Sigmoid colon (tissue), 7 donors: ENCODE measurements at regions of chrX and their contacts with region 1.

Region 1: GRCh38 chrX:132092439-132093065 is 35.3 kb downstream of the FRMD7 start:
- DNase-seq: no peak
- H3K4me3 ChIP-seq: no peak overlapping the region
- H3K27ac ChIP-seq: no peak overlapping the region
- H3K4me1 ChIP-seq: no peaks in the 10 kb centered on the region
- H3K27me3 ChIP-seq: no peaks in the 10 kb centered on the region
- CTCF ChIP-seq: peak; percentile 28 to 63 (median 28)
- EP300 ChIP-seq: no peak
- POLR2A ChIP-seq: no peak

Region 2: DNA sequence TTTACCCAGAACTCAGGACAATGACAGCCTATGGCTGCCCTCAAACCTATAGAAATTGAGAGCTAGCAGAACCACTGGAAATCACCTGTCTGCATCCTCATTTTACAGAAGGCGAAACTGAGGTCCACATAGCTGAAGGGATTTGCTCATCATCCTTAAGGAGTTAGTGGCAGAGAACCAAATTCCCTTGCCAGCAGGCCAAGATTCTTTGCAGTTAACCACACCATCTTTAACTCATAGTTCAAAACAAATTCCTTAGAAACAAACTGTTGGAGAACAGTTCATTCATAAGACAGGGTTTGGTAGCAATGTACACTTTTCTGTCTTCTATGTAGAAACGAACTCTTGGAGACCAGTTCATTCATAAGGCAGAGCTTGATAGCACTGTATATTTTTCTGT is 164.6 kb after region 1 on chrX:
- intact Hi-C with region 1: no loop called
- DNase-seq: no peak
- H3K4me3 ChIP-seq: no peak overlapping the region
- H3K27ac ChIP-seq: no peak overlapping the region
- H3K4me1 ChIP-seq: no peaks in the 10 kb centered on the region
- H3K27me3 ChIP-seq: no peaks in the 10 kb centered on the region
- CTCF ChIP-seq: no peak
- EP300 ChIP-seq: no peak
- POLR2A ChIP-seq: no peak

Region 3: DNA sequence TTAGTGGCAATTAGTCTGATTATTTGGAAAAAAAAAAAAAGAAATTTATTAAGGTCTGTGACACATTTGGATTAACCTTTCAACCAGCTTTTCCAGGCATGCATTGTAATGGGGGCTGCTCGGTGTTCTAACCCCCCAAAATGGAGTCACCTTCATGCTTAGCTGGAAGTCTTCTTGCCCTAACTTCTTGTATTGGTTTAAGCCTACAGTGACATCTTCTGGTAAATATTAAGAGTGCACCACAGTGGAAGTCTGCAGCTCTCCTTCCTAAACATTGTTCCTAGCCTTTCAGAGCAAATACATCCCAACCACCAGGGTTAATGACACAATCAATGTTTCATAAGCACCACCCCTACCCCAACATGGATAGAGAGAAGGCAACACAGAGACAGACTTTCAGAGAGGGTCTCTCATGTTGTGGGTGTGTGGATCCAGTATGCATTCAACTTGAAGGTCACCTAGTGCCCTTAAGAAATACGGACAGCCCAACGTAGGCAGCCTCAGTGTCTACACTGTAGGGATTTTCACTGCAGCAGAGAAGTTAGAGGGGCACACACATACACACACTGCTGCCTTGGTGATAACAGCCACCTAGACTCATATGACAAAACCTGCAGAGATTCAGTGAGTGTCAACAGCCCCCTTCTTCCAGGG is 539.2 kb after region 1 on chrX:
- intact Hi-C with region 1: loop called (anchors 10 kb)
- DNase-seq: no peak
- H3K4me3 ChIP-seq: no peak overlapping the region
- H3K27ac ChIP-seq: no peak overlapping the region
- H3K4me1 ChIP-seq: no peaks in the 10 kb centered on the region
- H3K27me3 ChIP-seq: no peaks in the 10 kb centered on the region
- CTCF ChIP-seq: peak; percentile 7 to 52 (median 26)
- EP300 ChIP-seq: no peak
- POLR2A ChIP-seq: no peak

Region 4: GRCh38 chrX:132740316-132741123 is 648.0 kb after region 1 on chrX:
- intact Hi-C with region 1: no loop called
- DNase-seq: no peak
- H3K4me3 ChIP-seq: no peak overlapping the region
- H3K27ac ChIP-seq: no peak overlapping the region
- H3K4me1 ChIP-seq: no peaks in the 10 kb centered on the region
- H3K27me3 ChIP-seq: peaks cover 0 to 5% (median 0%) of the 10 kb centered on the region in 3 donors
- CTCF ChIP-seq: peak in 1 of 4 experiments; percentile 32
- EP300 ChIP-seq: no peak
- POLR2A ChIP-seq: no peak